IMR-90 (cell line): ENCODE measurements at regions of chr16 and their contacts with region 1.

Region 1: GRCh38 chr16:22077700-22078313 is 14.5 kb upstream of the VWA3A start:
- DNase-seq: peak; percentile 60
- ATAC-seq: peak; percentile 71
- H3K4me3 ChIP-seq: no peak overlapping the region
- H3K27ac ChIP-seq: no peak overlapping the region
- H3K4me1 ChIP-seq: peaks cover 13% of the 10 kb centered on the region
- H3K27me3 ChIP-seq: no peaks in the 10 kb centered on the region
- CTCF ChIP-seq: peak; percentile 90
- POLR2A ChIP-seq: 0 out of 2 replicates have a peak, but pooled peaks have one; percentile 29
- RAD21 ChIP-seq: peak; percentile 86

Region 2: DNA sequence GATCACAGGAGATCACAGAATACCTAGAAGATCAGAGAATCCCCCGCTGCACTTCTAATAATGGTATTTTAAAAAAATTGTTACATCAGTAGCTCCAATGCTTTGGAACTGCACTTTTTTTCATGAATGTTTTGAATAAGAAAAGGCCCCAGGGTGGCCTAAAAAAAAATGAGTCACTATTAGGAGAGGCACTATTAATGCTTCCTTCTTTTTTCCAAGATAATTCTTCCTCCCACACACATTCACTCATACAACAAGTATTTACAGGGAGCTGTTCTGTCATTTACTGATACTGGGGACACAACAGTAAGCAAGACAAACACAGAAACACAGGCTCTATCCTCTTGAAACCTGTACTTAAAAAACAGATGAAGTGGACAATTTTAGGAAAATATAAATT is 76.2 kb before region 1 on chr16:
- CTCF ChIA-PET with region 1: interaction called, 46 read pairs
- POLR2A ChIA-PET with region 1: no interaction called
- dilution Hi-C with region 1: no loop called
- in situ Hi-C with region 1: loop called (anchors 5 kb)
- intact Hi-C with region 1: loop called (anchors 1 kb)
- DNase-seq: peak; percentile 71
- ATAC-seq: peak; percentile 64
- H3K4me3 ChIP-seq: no peak overlapping the region
- H3K27ac ChIP-seq: no peak overlapping the region
- H3K4me1 ChIP-seq: peaks cover 3% of the 10 kb centered on the region
- H3K27me3 ChIP-seq: no peaks in the 10 kb centered on the region
- CTCF ChIP-seq: no peak
- POLR2A ChIP-seq: no peak
- RAD21 ChIP-seq: no peak

Region 3: DNA sequence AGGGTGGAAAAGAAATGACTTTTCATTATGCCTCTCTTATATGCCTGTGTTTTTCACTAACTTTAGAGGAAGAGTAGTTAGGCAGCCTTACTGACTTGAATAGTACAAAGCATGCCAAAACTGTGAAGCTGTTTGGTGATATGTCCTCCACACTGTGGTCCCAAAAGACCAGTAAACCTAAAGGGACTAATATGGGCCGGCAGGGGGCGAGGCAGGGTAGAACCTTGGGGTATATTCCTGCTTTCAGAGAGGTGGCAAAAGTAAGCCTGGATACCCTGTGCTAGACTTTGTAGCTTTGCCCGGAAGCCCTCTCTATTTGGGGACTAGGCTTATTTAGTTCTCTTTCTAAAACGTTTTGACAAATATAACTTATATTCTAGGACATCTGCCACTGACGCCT is 21.9 kb before region 1 on chr16:
- CTCF ChIA-PET with region 1: interaction called, 10 read pairs
- POLR2A ChIA-PET with region 1: no interaction called
- dilution Hi-C with region 1: no loop called
- in situ Hi-C with region 1: no loop called
- intact Hi-C with region 1: no loop called
- DNase-seq: no peak
- ATAC-seq: no peak
- H3K4me3 ChIP-seq: no peak overlapping the region
- H3K27ac ChIP-seq: no peak overlapping the region
- H3K4me1 ChIP-seq: no peaks in the 10 kb centered on the region
- H3K27me3 ChIP-seq: no peaks in the 10 kb centered on the region
- CTCF ChIP-seq: no peak
- POLR2A ChIP-seq: no peak
- RAD21 ChIP-seq: no peak

Region 4: GRCh38 chr16:22091758-22092600 is 14.2 kb after region 1 on chr16 and contains the start of gene VWA3A:
- CTCF ChIA-PET with region 1: interaction called, 14 read pairs
- POLR2A ChIA-PET with region 1: no interaction called
- dilution Hi-C with region 1: no loop called
- in situ Hi-C with region 1: no loop called
- intact Hi-C with region 1: no loop called
- DNase-seq: peak; percentile 64
- ATAC-seq: peak; percentile 93
- H3K4me3 ChIP-seq: no peak within 1 kb of the TSS
- H3K27ac ChIP-seq: no peak within 1 kb of the TSS
- H3K4me1 ChIP-seq: peaks cover 7% of the 10 kb centered on the region
- H3K27me3 ChIP-seq: peaks cover 4% of the 10 kb centered on the region; the same call in 1 of the 2 replicates
- CTCF ChIP-seq: no peak
- POLR2A ChIP-seq: no peak
- RAD21 ChIP-seq: no peak
- total RNA-seq, gene VWA3A: not detected in 2 replicates

Region 5: DNA sequence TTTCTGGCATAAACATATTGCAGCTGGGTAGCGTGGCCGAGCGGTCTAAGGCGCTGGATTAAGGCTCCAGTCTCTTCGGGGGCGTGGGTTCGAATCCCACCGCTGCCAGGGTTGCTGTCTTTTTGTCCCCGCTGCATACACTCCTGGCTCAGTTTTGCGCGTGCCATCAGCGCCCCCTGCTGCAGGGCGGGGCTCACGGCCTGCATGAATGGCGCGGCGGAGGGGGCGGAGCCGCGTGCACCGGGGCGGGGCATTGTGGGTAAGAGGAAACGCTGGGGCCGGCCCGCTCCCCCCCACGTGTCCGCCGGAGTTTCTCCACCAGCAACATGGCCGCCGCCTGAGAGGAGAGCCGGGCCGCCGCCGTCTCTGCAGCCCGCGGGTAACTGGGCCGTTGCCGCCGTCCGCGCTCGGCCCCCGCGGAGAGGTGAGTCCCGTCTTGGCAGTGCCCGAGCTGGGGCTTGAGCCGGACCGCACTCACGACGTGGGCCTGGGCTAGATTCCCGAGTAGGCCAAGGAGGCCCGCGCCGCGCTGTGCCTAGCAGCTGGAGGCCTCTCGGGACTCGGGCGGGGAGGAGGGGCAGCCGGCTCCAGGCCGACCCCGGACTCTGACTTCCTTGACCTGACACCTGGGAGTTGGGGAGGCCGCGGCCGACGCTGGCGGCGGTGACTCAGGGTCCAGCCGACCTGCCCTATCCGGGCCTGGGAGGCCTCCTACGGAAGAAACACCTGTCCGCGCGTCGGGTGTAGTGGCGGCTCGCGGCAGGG is 219.5 kb after region 1 on chr16 and contains the start of gene POLR3E:
- CTCF ChIA-PET with region 1: interaction called, 3 read pairs
- POLR2A ChIA-PET with region 1: no interaction called
- dilution Hi-C with region 1: no loop called
- in situ Hi-C with region 1: no loop called
- intact Hi-C with region 1: loop called (anchors 10 kb)
- DNase-seq: peak; percentile 95
- ATAC-seq: peak; percentile 93
- H3K4me3 ChIP-seq: peak within 1 kb of the TSS; percentile 75
- H3K27ac ChIP-seq: peak within 1 kb of the TSS; percentile 80
- H3K4me1 ChIP-seq: peaks cover 2% of the 10 kb centered on the region; the same call in 1 of the 2 replicates
- H3K27me3 ChIP-seq: no peaks in the 10 kb centered on the region
- CTCF ChIP-seq: peak; percentile 94
- POLR2A ChIP-seq: peak; percentile 64; the same call in 1 of the 2 replicates
- RAD21 ChIP-seq: peak; percentile 84
- total RNA-seq, gene POLR3E: 19.9 and 71.1 TPM in 2 replicates